Vagina (tissue), 2 donors: ENCODE measurements at regions of chr2 and their contacts with region 1.

Region 1: GRCh38 chr2:217943446-217944389 is 59.1 kb downstream of the TNS1 start:
- DNase-seq: no peak
- H3K4me3 ChIP-seq: peak overlapping the region; percentile 59 to 69
- H3K27ac ChIP-seq: peak overlapping the region; percentile 87
- H3K4me1 ChIP-seq: peaks cover 96% of the 10 kb centered on the region
- H3K27me3 ChIP-seq: no peaks in the 10 kb centered on the region
- CTCF ChIP-seq: peak in 1 of 3 experiments; percentile 28
- POLR2A ChIP-seq: peak in 1 of 2 donors; percentile 54

Region 2: GRCh38 chr2:217899231-217900009 is 44.3 kb before region 1 on chr2:
- intact Hi-C with region 1: loop called (anchors 5 kb)
- DNase-seq: no peak
- H3K4me3 ChIP-seq: no peak overlapping the region
- H3K27ac ChIP-seq: peak overlapping the region; percentile 91
- H3K4me1 ChIP-seq: peaks cover 70% of the 10 kb centered on the region
- H3K27me3 ChIP-seq: no peaks in the 10 kb centered on the region
- CTCF ChIP-seq: peak in 2 of 3 experiments; percentile 41 to 58
- POLR2A ChIP-seq: no peak

Region 3: GRCh38 chr2:217928324-217929181 is 15.2 kb before region 1 on chr2:
- intact Hi-C with region 1: no loop called
- DNase-seq: no peak
- H3K4me3 ChIP-seq: peak overlapping the region in 1 of 2 donors; percentile 12
- H3K27ac ChIP-seq: peak overlapping the region; percentile 87
- H3K4me1 ChIP-seq: peaks cover 97% of the 10 kb centered on the region
- H3K27me3 ChIP-seq: no peaks in the 10 kb centered on the region
- CTCF ChIP-seq: no peak
- POLR2A ChIP-seq: no peak

Region 4: DNA sequence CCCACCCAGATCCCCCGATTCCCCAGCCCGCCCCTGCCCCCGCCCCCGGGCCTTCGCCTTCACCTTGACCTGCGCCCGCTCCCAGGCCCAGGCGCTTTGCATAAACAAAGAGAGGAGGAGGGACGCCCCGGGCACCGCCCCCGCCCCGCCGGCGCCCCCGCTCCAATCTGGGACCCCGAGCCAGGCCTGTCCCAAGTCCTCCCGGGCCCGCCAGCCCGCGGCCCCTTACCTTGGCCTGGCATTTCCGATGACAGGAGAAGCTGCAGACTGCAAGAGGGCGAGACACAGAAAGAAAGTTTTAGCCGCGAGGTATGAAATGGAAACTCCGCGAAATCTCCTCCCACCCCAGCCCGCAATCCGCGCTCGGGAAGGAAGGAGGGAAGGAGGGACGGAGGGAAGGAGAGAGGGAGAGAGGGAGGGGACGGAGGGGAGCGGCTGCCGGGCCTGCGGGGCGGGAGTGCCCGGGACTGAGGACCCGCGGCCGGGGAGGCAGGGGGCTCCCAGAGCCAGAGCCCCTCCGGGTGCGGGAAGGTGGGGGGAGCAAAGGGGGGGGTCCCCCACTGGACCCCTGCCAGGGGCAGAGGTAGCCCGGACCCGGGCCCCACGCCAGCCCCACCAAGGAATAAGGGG is 34.9 kb after region 1 on chr2:
- intact Hi-C with region 1: loop called (anchors 5 kb)
- DNase-seq: no peak
- H3K4me3 ChIP-seq: peak overlapping the region; percentile 47 to 62
- H3K27ac ChIP-seq: peak overlapping the region; percentile 83
- H3K4me1 ChIP-seq: peaks cover 68% of the 10 kb centered on the region
- H3K27me3 ChIP-seq: no peaks in the 10 kb centered on the region
- CTCF ChIP-seq: no peak
- POLR2A ChIP-seq: no peak